PC-3 (cell line): ENCODE measurements at regions of chr5 and their contacts with region 1.

Region 1: DNA sequence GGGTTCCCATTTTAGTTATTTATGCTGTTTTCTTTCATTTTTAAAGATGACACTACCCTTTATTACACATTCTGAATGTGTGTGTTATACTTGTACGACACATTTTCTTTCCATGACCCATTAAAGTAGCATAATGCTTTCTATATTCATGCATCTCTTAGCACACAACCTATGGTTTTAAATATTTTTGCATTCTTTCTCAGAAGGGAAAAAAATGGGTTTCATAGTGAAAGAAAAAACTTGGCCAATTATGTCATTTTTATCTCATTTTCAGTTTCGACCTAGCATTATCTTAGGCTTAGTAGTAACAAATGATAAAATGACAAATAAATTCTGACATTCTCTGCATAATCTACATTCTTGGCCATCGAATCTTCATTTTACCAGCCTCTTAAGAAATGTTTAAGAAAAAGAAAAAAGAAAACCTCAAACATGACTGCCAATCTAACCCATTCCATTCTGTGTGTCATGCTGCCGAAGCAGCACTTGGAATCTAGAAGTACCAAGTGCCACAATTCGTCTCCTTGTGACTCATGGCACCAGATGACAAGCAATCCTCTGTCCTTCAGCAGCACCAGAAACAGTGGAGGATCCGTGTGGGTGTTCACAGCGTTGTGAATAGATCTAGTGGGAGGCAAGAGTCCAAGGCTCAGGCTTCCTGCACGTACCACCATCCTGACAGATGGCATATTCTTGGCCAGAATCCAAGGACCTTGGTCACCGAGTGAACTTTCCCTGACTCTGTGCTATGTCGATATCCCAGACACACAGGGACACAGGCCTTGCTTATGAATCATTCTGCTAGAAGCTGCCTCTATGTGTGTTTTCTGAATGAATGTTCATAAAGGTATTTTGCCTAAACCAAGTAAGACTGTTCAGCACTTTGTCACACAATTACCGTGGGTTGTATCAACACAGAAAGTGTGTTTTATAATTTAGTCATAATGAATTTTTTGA is 502.7 kb downstream of the NR2F1-AS1 start:
- DNase-seq: peak; percentile 100
- ATAC-seq: peak; percentile 92
- H3K4me3 ChIP-seq: peak overlapping the region; percentile 55
- H3K27ac ChIP-seq: peak overlapping the region; percentile 90
- H3K4me1 ChIP-seq: peaks cover 43% of the 10 kb centered on the region
- H3K27me3 ChIP-seq: no peaks in the 10 kb centered on the region
- CTCF ChIP-seq: no peak

Region 2: GRCh38 chr5:92560698-92561361 is 517.5 kb before region 1 on chr5:
- CTCF ChIA-PET with region 1: no interaction called
- POLR2A ChIA-PET with region 1: no interaction called
- intact Hi-C with region 1: loop called (anchors 10 kb)
- DNase-seq: peak; percentile 4
- ATAC-seq: no peak
- H3K4me3 ChIP-seq: no peak overlapping the region
- H3K27ac ChIP-seq: peak overlapping the region; percentile 79
- H3K4me1 ChIP-seq: peaks cover 37% of the 10 kb centered on the region
- H3K27me3 ChIP-seq: no peaks in the 10 kb centered on the region
- CTCF ChIP-seq: no peak

Region 3: DNA sequence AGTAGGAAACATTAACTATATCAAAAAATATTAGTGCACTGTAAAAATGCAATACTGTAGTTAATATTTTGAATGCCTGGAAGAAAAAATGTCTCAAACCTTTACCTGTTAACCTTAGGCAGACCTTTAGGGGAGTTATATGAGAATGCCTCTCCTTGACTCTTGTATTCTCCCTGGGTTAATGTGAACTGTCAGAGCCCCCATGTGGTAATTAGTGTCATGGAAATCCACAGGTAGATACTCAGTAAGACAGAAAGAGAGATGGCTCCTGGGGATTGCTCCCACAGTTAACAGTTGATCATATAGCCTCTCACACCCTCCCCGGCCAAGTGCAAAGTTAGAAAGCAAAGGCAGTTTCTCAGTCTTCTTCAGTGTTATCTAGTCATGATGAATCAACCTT is 240.1 kb before region 1 on chr5:
- CTCF ChIA-PET with region 1: no interaction called
- POLR2A ChIA-PET with region 1: no interaction called
- intact Hi-C with region 1: loop called (anchors 10 kb)
- DNase-seq: peak; percentile 52
- ATAC-seq: peak; percentile 17; the same call in 1 of the 2 replicates
- H3K4me3 ChIP-seq: no peak overlapping the region
- H3K27ac ChIP-seq: peak overlapping the region; percentile 83
- H3K4me1 ChIP-seq: peaks cover 29% of the 10 kb centered on the region
- H3K27me3 ChIP-seq: no peaks in the 10 kb centered on the region
- CTCF ChIP-seq: peak; percentile 62

Region 4: GRCh38 chr5:92945630-92946097 is 132.7 kb before region 1 on chr5:
- CTCF ChIA-PET with region 1: no interaction called
- POLR2A ChIA-PET with region 1: no interaction called
- intact Hi-C with region 1: loop called (anchors 5 kb)
- DNase-seq: peak; percentile 62
- ATAC-seq: peak; percentile 53
- H3K4me3 ChIP-seq: peak overlapping the region; percentile 27
- H3K27ac ChIP-seq: peak overlapping the region; percentile 98
- H3K4me1 ChIP-seq: peaks cover 45% of the 10 kb centered on the region
- H3K27me3 ChIP-seq: no peaks in the 10 kb centered on the region
- CTCF ChIP-seq: no peak

Region 5: DNA sequence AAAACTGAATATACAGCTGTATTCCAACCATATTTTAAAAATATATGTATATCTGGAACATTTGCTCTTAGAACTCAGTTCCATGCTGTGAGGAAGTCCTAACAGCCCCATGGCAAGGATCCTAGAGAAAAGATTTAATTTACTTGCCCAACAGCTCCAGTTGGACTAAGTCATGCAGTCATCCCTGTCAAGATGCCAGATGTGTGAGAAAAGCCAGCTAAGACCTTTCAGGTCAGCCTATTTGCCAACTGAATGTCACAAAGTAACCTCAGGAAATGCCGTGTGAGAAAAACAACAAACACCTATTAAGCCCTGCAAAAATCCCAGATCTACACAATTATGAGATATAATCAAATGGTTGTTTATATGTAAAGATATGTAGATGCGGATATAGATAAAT is 86.3 kb after region 1 on chr5:
- CTCF ChIA-PET with region 1: no interaction called
- POLR2A ChIA-PET with region 1: no interaction called
- intact Hi-C with region 1: loop called (anchors 1 kb)
- DNase-seq: peak; percentile 95
- ATAC-seq: peak; percentile 10; the same call in 1 of the 2 replicates
- H3K4me3 ChIP-seq: no peak overlapping the region
- H3K27ac ChIP-seq: peak overlapping the region; percentile 93
- H3K4me1 ChIP-seq: peaks cover 56% of the 10 kb centered on the region
- H3K27me3 ChIP-seq: no peaks in the 10 kb centered on the region
- CTCF ChIP-seq: no peak

Region 6: GRCh38 chr5:93249651-93250289 is 171.4 kb after region 1 on chr5:
- CTCF ChIA-PET with region 1: no interaction called
- POLR2A ChIA-PET with region 1: interaction called, 4 read pairs
- intact Hi-C with region 1: loop called (anchors 10 kb)
- DNase-seq: peak; percentile 76
- ATAC-seq: peak; percentile 72
- H3K4me3 ChIP-seq: peak overlapping the region; percentile 40; the same call in 1 of the 2 replicates
- H3K27ac ChIP-seq: peak overlapping the region; percentile 93
- H3K4me1 ChIP-seq: peaks cover 36% of the 10 kb centered on the region
- H3K27me3 ChIP-seq: no peaks in the 10 kb centered on the region
- CTCF ChIP-seq: no peak

Region 7: GRCh38 chr5:93789173-93790070 is 711.1 kb after region 1 on chr5:
- CTCF ChIA-PET with region 1: no interaction called
- POLR2A ChIA-PET with region 1: no interaction called
- intact Hi-C with region 1: loop called (anchors 5 kb)
- DNase-seq: peak; percentile 90
- ATAC-seq: peak; percentile 92
- H3K4me3 ChIP-seq: no peak overlapping the region
- H3K27ac ChIP-seq: peak overlapping the region; percentile 27
- H3K4me1 ChIP-seq: peaks cover 26% of the 10 kb centered on the region
- H3K27me3 ChIP-seq: no peaks in the 10 kb centered on the region
- CTCF ChIP-seq: peak; percentile 62